ENCODE measurements at regions of chr2 and their contacts with region 1.

Region 1: GRCh38 chr2:57373530-57373929 is 673.1 kb upstream of the VRK2 start:
- DNase-seq: no peak
- H3K4me3 Mint-ChIP-seq: no peak overlapping the region
- H3K27ac Mint-ChIP-seq: no peak overlapping the region
- H3K4me1 Mint-ChIP-seq: no peaks in the 10 kb centered on the region
- H3K27me3 Mint-ChIP-seq: no peaks in the 10 kb centered on the region

Region 2: DNA sequence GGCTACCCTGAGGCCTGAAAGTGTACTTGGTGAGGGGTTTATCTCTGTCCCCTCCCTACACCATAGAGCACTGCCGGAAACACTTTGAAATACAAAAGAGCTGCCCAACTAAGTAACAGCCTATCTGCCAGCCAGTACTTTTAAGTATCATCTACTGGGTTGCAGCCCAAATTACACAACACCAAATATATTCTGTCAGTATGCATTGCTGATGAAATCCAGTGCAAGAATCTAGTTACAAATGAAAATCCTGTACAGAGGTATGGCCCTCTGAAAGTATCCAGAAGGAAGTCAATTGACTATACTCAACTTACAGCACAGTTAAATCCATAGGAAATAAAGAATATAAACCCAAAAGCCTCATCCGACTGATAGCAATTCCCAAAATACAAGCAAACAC is 908.9 kb before region 1 on chr2:
- CTCF ChIA-PET with region 1: no interaction called
- intact Hi-C with region 1: no loop called
- DNase-seq: no peak
- H3K4me3 Mint-ChIP-seq: no peak overlapping the region
- H3K27ac Mint-ChIP-seq: no peak overlapping the region
- H3K4me1 Mint-ChIP-seq: no peaks in the 10 kb centered on the region
- H3K27me3 Mint-ChIP-seq: no peaks in the 10 kb centered on the region

Region 3: GRCh38 chr2:57330447-57330846 is 43.1 kb before region 1 on chr2:
- CTCF ChIA-PET with region 1: no interaction called
- intact Hi-C with region 1: no loop called
- DNase-seq: no peak
- H3K4me3 Mint-ChIP-seq: no peak overlapping the region
- H3K27ac Mint-ChIP-seq: no peak overlapping the region
- H3K4me1 Mint-ChIP-seq: no peaks in the 10 kb centered on the region
- H3K27me3 Mint-ChIP-seq: no peaks in the 10 kb centered on the region

Region 4: DNA sequence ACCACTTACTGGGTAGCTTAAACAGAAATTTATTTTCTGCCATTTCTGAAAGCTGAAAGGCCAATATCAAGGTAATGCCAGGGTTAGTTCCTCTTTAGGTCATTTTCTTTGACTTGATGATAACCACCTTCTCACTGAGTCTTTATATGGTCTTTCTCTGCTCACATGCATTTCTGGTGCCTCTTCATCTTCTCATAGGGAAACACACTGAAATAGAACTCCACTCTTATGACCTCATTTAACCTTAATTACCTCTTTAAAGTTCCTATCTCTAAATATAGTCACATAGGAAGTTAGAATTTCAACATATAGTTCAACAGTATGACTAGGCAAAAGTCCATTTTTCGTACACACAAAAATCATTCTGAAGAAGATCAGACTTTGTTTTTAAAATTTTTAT is 56.3 kb after region 1 on chr2:
- CTCF ChIA-PET with region 1: no interaction called
- intact Hi-C with region 1: loop called (anchors 5 kb)
- DNase-seq: no peak
- H3K4me3 Mint-ChIP-seq: no peak overlapping the region
- H3K27ac Mint-ChIP-seq: no peak overlapping the region
- H3K4me1 Mint-ChIP-seq: no peaks in the 10 kb centered on the region
- H3K27me3 Mint-ChIP-seq: no peaks in the 10 kb centered on the region